Natural killer cell (primary cell): ENCODE measurements at regions of chr19 and their contacts with region 1.

Region 1: GRCh38 chr19:21141787-21142464 is at the start of gene ZNF431:
- DNase-seq: peak; percentile 87 to 95
- ATAC-seq: peak; percentile 97 to 99 (median 99)
- H3K4me3 ChIP-seq: peak within 1 kb of the TSS; percentile 62
- H3K4me3 Mint-ChIP-seq: peak within 1 kb of the TSS; percentile 95
- H3K27ac ChIP-seq: peak within 1 kb of the TSS; percentile 79
- H3K27ac Mint-ChIP-seq: peak within 1 kb of the TSS; percentile 95 to 98
- H3K4me1 ChIP-seq: peaks cover 9% of the 10 kb centered on the region
- H3K4me1 Mint-ChIP-seq: peaks cover 33 to 44% of the 10 kb centered on the region in 2 donors
- H3K27me3 ChIP-seq: no peaks in the 10 kb centered on the region
- H3K27me3 Mint-ChIP-seq: no peaks in the 10 kb centered on the region
- CTCF ChIP-seq: no peak
- total RNA-seq, gene ZNF431: 30.1 to 39.7 (median 30.4) TPM

Region 2: GRCh38 chr19:20565321-20566018 is 576.5 kb before region 1 on chr19 and contains the start of gene ZNF737:
- intact Hi-C with region 1: loop called (anchors 10 kb)
- DNase-seq: peak; percentile 90 to 97
- ATAC-seq: peak; percentile 90 to 95 (median 92)
- H3K4me3 ChIP-seq: peak within 1 kb of the TSS; percentile 78
- H3K4me3 Mint-ChIP-seq: peak within 1 kb of the TSS; percentile 100
- H3K27ac ChIP-seq: peak within 1 kb of the TSS; percentile 84
- H3K27ac Mint-ChIP-seq: peak within 1 kb of the TSS; percentile 99 to 100
- H3K4me1 ChIP-seq: peaks cover 11% of the 10 kb centered on the region
- H3K4me1 Mint-ChIP-seq: peaks cover 31 to 36% of the 10 kb centered on the region in 2 donors
- H3K27me3 ChIP-seq: no peaks in the 10 kb centered on the region
- H3K27me3 Mint-ChIP-seq: no peaks in the 10 kb centered on the region
- CTCF ChIP-seq: no peak
- total RNA-seq, gene ZNF737: 10.1 to 16.5 (median 13.7) TPM

Region 3: GRCh38 chr19:21020298-21021227 is 121.4 kb before region 1 on chr19 and contains the start of gene ZNF430:
- intact Hi-C with region 1: loop called (anchors 10 kb)
- DNase-seq: peak; percentile 92 to 96
- ATAC-seq: peak; percentile 94 to 99 (median 97)
- H3K4me3 ChIP-seq: peak within 1 kb of the TSS; percentile 98
- H3K4me3 Mint-ChIP-seq: peak within 1 kb of the TSS; percentile 100
- H3K27ac ChIP-seq: peak within 1 kb of the TSS; percentile 97
- H3K27ac Mint-ChIP-seq: peak within 1 kb of the TSS; percentile 99 to 100
- H3K4me1 ChIP-seq: peaks cover 19% of the 10 kb centered on the region
- H3K4me1 Mint-ChIP-seq: peaks cover 37 to 39% of the 10 kb centered on the region in 2 donors
- H3K27me3 ChIP-seq: no peaks in the 10 kb centered on the region
- H3K27me3 Mint-ChIP-seq: no peaks in the 10 kb centered on the region
- CTCF ChIP-seq: no peak
- total RNA-seq, gene ZNF430: 32.7 to 43.0 (median 33.3) TPM

Region 4: DNA sequence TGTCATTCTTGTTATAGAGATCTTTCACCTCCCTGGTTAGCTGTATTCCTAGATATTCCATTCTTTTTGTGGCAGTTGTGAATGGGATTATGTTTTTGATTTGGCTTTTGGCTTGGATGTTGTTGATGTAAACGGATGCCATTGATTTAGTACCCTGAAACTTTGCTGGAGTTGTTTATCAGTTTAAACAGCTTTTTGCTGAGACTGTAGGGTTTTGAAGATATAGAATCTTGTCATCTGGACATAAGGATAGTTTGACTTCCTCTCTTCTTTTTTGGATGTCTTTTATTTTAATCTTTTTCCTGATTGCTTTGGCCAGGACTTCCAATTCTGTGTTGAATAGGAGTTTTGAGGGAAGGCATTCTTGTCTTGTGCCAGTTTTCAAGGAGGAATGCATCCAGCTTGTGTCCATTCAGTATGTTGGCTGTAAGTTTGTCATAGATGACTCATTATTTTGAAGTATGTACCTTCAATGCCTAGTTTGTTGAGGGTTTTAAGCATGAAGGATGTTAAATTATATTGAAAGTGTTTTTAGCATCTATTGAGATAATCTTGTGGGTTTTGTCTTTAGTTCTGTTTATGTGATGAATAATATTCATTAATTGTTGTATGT is 16.7 kb after region 1 on chr19:
- intact Hi-C with region 1: no loop called
- DNase-seq: no peak
- ATAC-seq: no peak
- H3K4me3 ChIP-seq: no peak overlapping the region
- H3K4me3 Mint-ChIP-seq: no peak overlapping the region
- H3K27ac ChIP-seq: no peak overlapping the region
- H3K27ac Mint-ChIP-seq: peak overlapping the region; percentile 50 to 65
- H3K4me1 ChIP-seq: no peaks in the 10 kb centered on the region
- H3K4me1 Mint-ChIP-seq: peaks cover 44 to 46% of the 10 kb centered on the region in 2 donors
- H3K27me3 ChIP-seq: no peaks in the 10 kb centered on the region
- H3K27me3 Mint-ChIP-seq: no peaks in the 10 kb centered on the region
- CTCF ChIP-seq: no peak

Region 5: DNA sequence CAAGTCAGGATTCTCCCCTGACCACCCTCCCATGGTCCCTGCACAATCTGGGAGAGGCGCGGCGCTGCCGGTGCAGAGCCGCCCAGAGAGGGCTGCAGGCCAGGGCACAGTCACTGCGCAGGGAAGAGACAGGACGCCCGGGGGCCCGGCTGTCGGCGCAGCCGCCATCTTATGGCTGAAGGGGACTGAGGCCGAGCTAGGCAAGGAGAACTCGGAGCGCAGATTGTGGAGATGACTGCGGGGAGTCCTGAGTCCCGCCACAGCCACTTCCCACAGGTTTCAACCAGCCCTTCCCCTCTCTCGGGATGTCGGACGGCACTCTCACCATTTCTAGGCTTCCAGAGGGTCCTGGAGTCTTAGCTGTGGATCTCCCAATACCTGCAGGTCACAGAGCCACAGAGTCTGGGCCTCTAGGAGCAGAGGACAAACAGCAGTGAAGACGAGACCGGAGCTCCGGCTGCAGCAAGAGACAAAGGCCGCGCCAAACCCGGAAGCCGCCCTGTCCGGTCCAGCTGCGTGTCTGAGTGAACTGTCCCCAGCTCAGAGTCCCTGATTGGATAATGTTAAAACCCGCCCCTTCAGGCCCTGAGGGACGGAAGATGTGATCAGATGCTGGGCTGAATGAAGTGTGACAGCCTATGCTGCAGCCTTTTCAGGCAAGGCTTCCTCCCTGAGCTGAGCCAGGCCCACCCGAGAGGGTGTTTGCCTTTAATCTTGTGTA is 187.1 kb after region 1 on chr19 and contains the start of gene ZNF708:
- intact Hi-C with region 1: loop called (anchors 5 kb)
- DNase-seq: peak; percentile 73 to 86
- ATAC-seq: peak; percentile 97 to 100 (median 98)
- H3K4me3 ChIP-seq: peak within 1 kb of the TSS; percentile 96
- H3K4me3 Mint-ChIP-seq: peak within 1 kb of the TSS; percentile 97
- H3K27ac ChIP-seq: peak within 1 kb of the TSS; percentile 97
- H3K27ac Mint-ChIP-seq: peak within 1 kb of the TSS; percentile 98
- H3K4me1 ChIP-seq: peaks cover 15% of the 10 kb centered on the region
- H3K4me1 Mint-ChIP-seq: peaks cover 34 to 38% of the 10 kb centered on the region in 2 donors
- H3K27me3 ChIP-seq: no peaks in the 10 kb centered on the region
- H3K27me3 Mint-ChIP-seq: no peaks in the 10 kb centered on the region
- CTCF ChIP-seq: no peak
- total RNA-seq, gene ZNF708: 21.2 to 24.4 (median 24.4) TPM